ENCODE measurements at regions of chr20 and their contacts with region 1.

Region 1: GRCh38 chr20:5788385-5788895 is 38.2 kb downstream of the SHLD1 start:
- DNase-seq: peak; percentile 95
- ATAC-seq: peak; percentile 78
- H3K4me3 ChIP-seq: no peak overlapping the region
- H3K27ac ChIP-seq: peak overlapping the region; percentile 3; the same call in 1 of the 2 replicates
- H3K4me1 ChIP-seq: peaks cover 20% of the 10 kb centered on the region
- H3K27me3 ChIP-seq: no peaks in the 10 kb centered on the region
- CTCF ChIP-seq: peak; percentile 96

Region 2: GRCh38 chr20:5529331-5530148 is 258.9 kb before region 1 on chr20:
- CTCF ChIA-PET with region 1: interaction called, 4 read pairs
- POLR2A ChIA-PET with region 1: no interaction called
- intact Hi-C with region 1: loop called (anchors 1 kb)
- DNase-seq: peak; percentile 87
- ATAC-seq: peak; percentile 88
- H3K4me3 ChIP-seq: peak overlapping the region; percentile 57
- H3K27ac ChIP-seq: no peak overlapping the region
- H3K4me1 ChIP-seq: peaks cover 3% of the 10 kb centered on the region; the same call in 1 of the 2 replicates
- H3K27me3 ChIP-seq: 0 out of 2 replicates have a peak, but pooled peaks cover 3% of the 10 kb centered on the region
- CTCF ChIP-seq: peak; percentile 98

Region 3: GRCh38 chr20:5569021-5569420 is 219.4 kb before region 1 on chr20:
- CTCF ChIA-PET with region 1: interaction called, 4 read pairs
- POLR2A ChIA-PET with region 1: no interaction called
- intact Hi-C with region 1: loop called (anchors 1 kb)
- DNase-seq: peak; percentile 84
- ATAC-seq: peak; percentile 96
- H3K4me3 ChIP-seq: no peak overlapping the region
- H3K27ac ChIP-seq: no peak overlapping the region
- H3K4me1 ChIP-seq: no peaks in the 10 kb centered on the region
- H3K27me3 ChIP-seq: no peaks in the 10 kb centered on the region
- CTCF ChIP-seq: peak; percentile 78

Region 4: GRCh38 chr20:5642155-5642981 is 146.1 kb before region 1 on chr20:
- CTCF ChIA-PET with region 1: no interaction called
- POLR2A ChIA-PET with region 1: interaction called, 10 read pairs
- intact Hi-C with region 1: no loop called
- DNase-seq: no peak
- ATAC-seq: no peak
- H3K4me3 ChIP-seq: no peak overlapping the region
- H3K27ac ChIP-seq: no peak overlapping the region
- H3K4me1 ChIP-seq: peaks cover 15% of the 10 kb centered on the region
- H3K27me3 ChIP-seq: no peaks in the 10 kb centered on the region
- CTCF ChIP-seq: no peak

Region 5: DNA sequence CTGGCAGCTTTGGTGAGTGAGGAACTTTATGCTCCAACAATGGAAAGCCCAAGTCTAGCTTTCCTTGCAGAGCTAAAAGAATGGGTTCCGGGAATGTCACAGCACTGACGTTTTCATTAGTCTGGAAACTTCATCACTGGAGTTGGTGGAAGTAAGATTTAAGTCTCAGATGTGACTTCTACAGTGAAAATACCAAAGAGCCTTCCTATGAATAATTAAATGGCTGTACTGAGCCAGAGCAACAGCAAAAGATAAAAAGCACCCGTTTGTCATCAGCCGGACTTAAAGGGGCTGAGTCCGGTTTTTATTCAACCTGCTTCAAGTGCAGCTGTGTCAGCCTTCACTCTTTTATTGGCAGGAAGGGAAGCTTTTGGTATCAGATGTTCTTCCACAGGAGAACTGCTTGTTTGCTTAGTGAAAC is 84.7 kb before region 1 on chr20:
- CTCF ChIA-PET with region 1: no interaction called
- POLR2A ChIA-PET with region 1: no interaction called
- intact Hi-C with region 1: loop called (anchors 5 kb)
- DNase-seq: peak; percentile 25
- ATAC-seq: peak; percentile 78
- H3K4me3 ChIP-seq: peak overlapping the region; percentile 10; the same call in 1 of the 2 replicates
- H3K27ac ChIP-seq: no peak overlapping the region
- H3K4me1 ChIP-seq: peaks cover 5% of the 10 kb centered on the region; the same call in 1 of the 2 replicates
- H3K27me3 ChIP-seq: no peaks in the 10 kb centered on the region
- CTCF ChIP-seq: no peak

Region 6: GRCh38 chr20:5749952-5750779 is 38.3 kb before region 1 on chr20 and contains the start of gene SHLD1:
- CTCF ChIA-PET with region 1: no interaction called
- POLR2A ChIA-PET with region 1: no interaction called
- intact Hi-C with region 1: loop called (anchors 2 kb)
- DNase-seq: peak; percentile 90
- ATAC-seq: peak; percentile 93
- H3K4me3 ChIP-seq: peak within 1 kb of the TSS; percentile 83
- H3K27ac ChIP-seq: peak within 1 kb of the TSS; percentile 74
- H3K4me1 ChIP-seq: peaks cover 12% of the 10 kb centered on the region
- H3K27me3 ChIP-seq: no peaks in the 10 kb centered on the region
- CTCF ChIP-seq: no peak
- total RNA-seq, gene SHLD1: 3.4 and 5.1 TPM in 2 replicates

Region 7: DNA sequence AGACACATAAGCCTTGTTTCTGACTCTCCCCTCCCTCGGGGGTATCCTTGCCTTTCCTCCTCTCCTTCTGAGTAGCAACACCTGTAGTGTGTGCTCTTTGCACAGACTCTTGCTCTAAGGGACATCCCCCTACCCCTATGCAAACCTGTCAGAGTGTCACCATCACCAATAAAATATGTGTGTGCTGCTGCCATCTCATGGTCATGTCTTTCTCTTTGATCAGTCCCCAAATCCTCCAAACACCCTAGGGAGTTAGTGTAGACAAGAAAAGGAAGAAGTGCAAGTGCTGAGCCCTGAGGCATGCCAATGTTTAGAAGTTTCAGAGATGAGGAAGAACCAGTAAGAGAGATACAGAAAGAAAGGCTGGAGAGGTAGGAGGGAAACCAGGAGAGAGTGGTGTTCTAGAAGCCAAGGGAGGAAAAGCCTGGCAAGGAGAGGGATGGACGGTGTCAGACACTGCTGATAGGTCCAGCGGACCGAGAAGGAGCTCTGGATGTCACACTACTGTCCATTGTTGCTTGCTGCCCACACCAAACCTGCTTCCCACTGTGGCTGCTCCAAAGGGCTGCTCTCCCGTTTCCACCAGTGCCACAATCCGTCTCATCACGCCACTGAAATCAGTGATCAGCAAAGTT is 145.5 kb after region 1 on chr20:
- CTCF ChIA-PET with region 1: no interaction called
- POLR2A ChIA-PET with region 1: no interaction called
- intact Hi-C with region 1: loop called (anchors 5 kb)
- DNase-seq: peak; percentile 62
- ATAC-seq: peak; percentile 86
- H3K4me3 ChIP-seq: no peak overlapping the region
- H3K27ac ChIP-seq: no peak overlapping the region
- H3K4me1 ChIP-seq: no peaks in the 10 kb centered on the region
- H3K27me3 ChIP-seq: 0 out of 2 replicates have a peak, but pooled peaks cover 4% of the 10 kb centered on the region
- CTCF ChIP-seq: peak; percentile 78

Region 8: DNA sequence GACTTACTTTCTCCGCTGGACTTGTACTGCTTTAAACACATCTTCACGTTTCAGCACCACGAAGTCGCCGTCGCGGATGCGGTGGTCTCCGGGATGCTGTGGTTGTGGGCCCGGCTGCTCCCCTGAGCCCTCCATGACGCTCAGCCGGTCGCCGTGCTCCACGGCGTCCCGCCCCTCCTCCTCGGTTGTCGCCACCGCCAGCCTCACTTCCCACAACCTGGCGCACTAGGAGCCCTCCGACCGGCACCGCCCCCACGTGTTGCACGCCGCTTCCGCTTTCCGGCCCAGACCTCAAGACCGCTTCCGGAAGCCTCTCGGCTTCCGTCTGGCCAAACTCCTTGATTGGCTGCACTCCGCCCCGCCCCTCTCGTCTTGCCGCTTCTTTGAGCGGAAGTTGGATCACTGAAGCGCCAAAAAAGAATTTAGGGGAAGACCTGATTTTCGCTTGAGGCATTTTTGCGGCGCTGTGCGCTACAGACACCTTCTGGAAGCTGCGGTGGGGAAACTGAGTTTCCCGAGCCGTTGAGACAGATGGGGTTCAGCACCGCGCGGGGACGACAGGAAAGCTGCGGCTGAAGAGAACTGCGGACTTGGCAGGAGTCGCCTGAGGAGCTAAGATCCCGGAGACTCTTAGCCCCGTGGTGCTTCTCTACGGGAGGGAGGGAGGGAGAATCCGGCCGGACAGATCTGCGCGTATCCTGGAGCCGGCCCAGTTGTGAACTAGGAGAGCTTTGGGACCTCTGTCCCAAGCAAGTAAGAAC is 162.0 kb after region 1 on chr20 and contains the starts of genes MCM8 and TRMT6:
- CTCF ChIA-PET with region 1: no interaction called
- POLR2A ChIA-PET with region 1: no interaction called
- intact Hi-C with region 1: no loop called
- DNase-seq: peak; percentile 99
- ATAC-seq: peak; percentile 90
- H3K4me3 ChIP-seq: peak within 1 kb of the TSS; percentile 85
- H3K27ac ChIP-seq: peak within 1 kb of the TSS; percentile 77
- H3K4me1 ChIP-seq: peaks cover 47% of the 10 kb centered on the region
- H3K27me3 ChIP-seq: no peaks in the 10 kb centered on the region
- CTCF ChIP-seq: no peak
- total RNA-seq, gene MCM8: 26.6 and 27.0 TPM in 2 replicates
- total RNA-seq, gene TRMT6: 35.4 and 44.0 TPM in 2 replicates

Region 9: DNA sequence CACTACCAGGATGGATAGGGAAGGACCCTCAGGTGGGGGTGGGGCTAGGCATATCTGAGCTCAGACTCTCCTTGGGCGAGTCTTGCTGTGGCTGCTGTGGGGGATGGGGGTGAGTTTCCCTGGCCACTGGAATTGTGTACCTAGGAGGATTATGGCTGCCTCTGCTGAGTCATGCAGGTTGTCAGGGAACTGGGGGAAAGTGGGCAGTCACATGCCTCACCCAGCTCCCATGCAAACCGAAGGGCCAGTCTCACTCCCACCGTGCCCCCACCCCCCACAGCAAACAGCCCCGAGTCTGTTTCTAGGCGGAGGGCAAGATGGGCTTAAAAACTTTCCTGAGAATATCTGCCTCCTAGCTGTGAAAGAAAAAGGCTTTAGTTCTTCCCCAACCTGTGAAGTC is 544.7 kb after region 1 on chr20:
- CTCF ChIA-PET with region 1: no interaction called
- POLR2A ChIA-PET with region 1: no interaction called
- intact Hi-C with region 1: no loop called
- DNase-seq: peak; percentile 46
- ATAC-seq: no peak
- H3K4me3 ChIP-seq: no peak overlapping the region
- H3K27ac ChIP-seq: no peak overlapping the region
- H3K4me1 ChIP-seq: peaks cover 10% of the 10 kb centered on the region; the same call in 1 of the 2 replicates
- H3K27me3 ChIP-seq: peaks cover 29% of the 10 kb centered on the region
- CTCF ChIP-seq: no peak